ENCODE measurements at regions of chr1 and their contacts with region 1.

Region 1: GRCh38 chr1:98468111-98468717 is 193.3 kb upstream of the SNX7 start:
- DNase-seq: peak in 1 of 2 experiments; percentile 30
- H3K4me3 ChIP-seq: no peak overlapping the region
- H3K4me3 Mint-ChIP-seq: peak overlapping the region; percentile 41
- H3K27ac Mint-ChIP-seq: no peak overlapping the region
- H3K4me1 ChIP-seq: no peaks in the 10 kb centered on the region
- H3K4me1 Mint-ChIP-seq: peaks cover 21% of the 10 kb centered on the region
- H3K27me3 ChIP-seq: no peaks in the 10 kb centered on the region
- H3K27me3 Mint-ChIP-seq: no peaks in the 10 kb centered on the region
- CTCF ChIP-seq: peak; percentile 63 to 75

Region 2: GRCh38 chr1:97668945-97669344 is 799.3 kb before region 1 on chr1:
- CTCF ChIA-PET with region 1: no interaction called
- POLR2A ChIA-PET with region 1: no interaction called
- intact Hi-C with region 1: loop called (anchors 10 kb)
- DNase-seq: peak; percentile 8 to 30
- H3K4me3 ChIP-seq: no peak overlapping the region
- H3K4me3 Mint-ChIP-seq: no peak overlapping the region
- H3K27ac Mint-ChIP-seq: no peak overlapping the region
- H3K4me1 ChIP-seq: no peaks in the 10 kb centered on the region
- H3K4me1 Mint-ChIP-seq: no peaks in the 10 kb centered on the region
- H3K27me3 ChIP-seq: no peaks in the 10 kb centered on the region
- H3K27me3 Mint-ChIP-seq: no peaks in the 10 kb centered on the region
- CTCF ChIP-seq: peak in 1 of 2 experiments; percentile 14

Region 3: DNA sequence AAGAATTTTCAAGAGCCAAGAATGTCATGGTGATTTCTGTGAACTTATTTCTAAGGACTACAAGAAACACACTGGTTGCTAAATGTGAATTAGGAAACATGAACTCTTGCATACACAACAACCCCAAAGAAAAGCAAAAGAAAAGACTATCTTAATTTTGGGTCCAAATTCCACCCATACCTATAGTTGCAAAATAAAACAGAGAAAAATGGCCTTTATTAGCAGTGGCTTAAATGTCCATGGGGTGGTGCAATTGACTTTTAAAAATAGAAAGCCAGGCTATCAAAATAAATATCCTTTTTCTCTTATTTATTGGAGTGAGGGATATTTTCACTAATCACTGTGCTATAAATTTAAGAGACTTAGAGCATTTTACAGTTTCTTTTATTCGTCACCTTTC is 466.4 kb before region 1 on chr1:
- CTCF ChIA-PET with region 1: no interaction called
- POLR2A ChIA-PET with region 1: no interaction called
- intact Hi-C with region 1: loop called (anchors 1 kb)
- DNase-seq: no peak
- H3K4me3 ChIP-seq: no peak overlapping the region
- H3K4me3 Mint-ChIP-seq: no peak overlapping the region
- H3K27ac Mint-ChIP-seq: no peak overlapping the region
- H3K4me1 ChIP-seq: peaks cover 7% of the 10 kb centered on the region
- H3K4me1 Mint-ChIP-seq: no peaks in the 10 kb centered on the region
- H3K27me3 ChIP-seq: no peaks in the 10 kb centered on the region
- H3K27me3 Mint-ChIP-seq: no peaks in the 10 kb centered on the region
- CTCF ChIP-seq: peak in 1 of 2 experiments; percentile 15

Region 4: DNA sequence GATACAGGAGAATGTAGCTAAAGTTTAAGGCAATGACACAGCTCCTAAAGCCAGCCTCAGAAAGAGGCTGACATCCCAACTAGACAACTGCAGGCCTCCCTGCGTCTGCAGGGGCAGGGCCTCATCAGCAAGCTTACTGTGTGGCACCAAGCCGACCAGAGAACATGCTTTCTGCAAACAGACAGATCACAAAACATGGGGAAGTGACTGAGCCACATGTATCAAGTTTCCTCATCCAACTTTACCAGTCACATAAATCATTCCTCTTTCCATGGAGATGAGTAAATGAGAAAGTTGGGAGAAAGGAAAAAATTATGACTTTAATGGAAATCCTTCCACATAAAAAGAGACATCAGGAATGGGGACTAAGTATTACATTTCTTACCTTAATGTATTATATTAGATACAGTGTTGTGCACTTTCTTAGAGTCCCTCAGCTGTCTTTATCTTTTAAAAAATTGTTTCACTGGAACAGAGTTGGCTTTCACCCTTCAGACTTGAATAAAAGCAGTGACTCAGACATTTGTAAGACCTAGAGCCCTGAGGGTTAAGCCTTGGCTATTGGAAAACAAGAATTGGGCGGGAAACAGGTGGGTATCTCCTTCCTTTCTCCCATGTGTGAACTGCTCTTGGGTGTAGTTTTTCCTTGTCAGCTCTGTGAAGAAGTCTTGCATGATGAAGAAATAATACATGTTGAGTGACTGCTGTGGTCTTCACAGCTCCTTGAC is 112.4 kb before region 1 on chr1:
- CTCF ChIA-PET with region 1: no interaction called
- POLR2A ChIA-PET with region 1: no interaction called
- intact Hi-C with region 1: no loop called
- DNase-seq: no peak
- H3K4me3 ChIP-seq: no peak overlapping the region
- H3K4me3 Mint-ChIP-seq: no peak overlapping the region
- H3K27ac Mint-ChIP-seq: no peak overlapping the region
- H3K4me1 ChIP-seq: no peaks in the 10 kb centered on the region
- H3K4me1 Mint-ChIP-seq: no peaks in the 10 kb centered on the region
- H3K27me3 ChIP-seq: no peaks in the 10 kb centered on the region
- H3K27me3 Mint-ChIP-seq: no peaks in the 10 kb centered on the region
- CTCF ChIP-seq: no peak